A673 (cell line): ENCODE measurements at regions of chr13 and their contacts with region 1.

Region 1: DNA sequence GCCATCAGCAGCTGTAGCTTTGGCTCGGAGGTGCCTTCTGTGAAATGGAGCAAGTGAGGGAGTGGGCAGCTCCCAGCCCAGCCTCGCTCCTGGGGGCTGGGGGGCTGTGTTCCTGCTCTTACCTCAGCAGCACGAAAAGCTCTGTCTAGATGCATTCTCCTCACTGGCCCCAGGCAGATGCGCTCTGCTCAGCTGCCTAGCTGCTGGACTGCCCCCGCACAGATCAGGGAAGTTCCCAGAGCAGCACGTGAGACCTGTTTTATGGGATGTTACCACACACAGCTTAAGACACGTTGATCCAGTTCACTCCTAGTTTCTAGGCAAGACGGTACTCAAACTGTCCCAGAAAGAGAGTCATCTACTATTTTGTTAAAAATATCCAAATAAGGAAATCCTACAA is 13.6 kb downstream of the LCP1 start:
- DNase-seq: no peak
- H3K4me3 ChIP-seq: no peak overlapping the region
- H3K27ac ChIP-seq: no peak overlapping the region
- H3K4me1 ChIP-seq: peaks cover 28% of the 10 kb centered on the region
- H3K27me3 ChIP-seq: no peaks in the 10 kb centered on the region
- CTCF ChIP-seq: no peak

Region 2: GRCh38 chr13:46288570-46289259 is 120.4 kb after region 1 on chr13:
- CTCF ChIA-PET with region 1: no interaction called
- POLR2A ChIA-PET with region 1: no interaction called
- intact Hi-C with region 1: loop called (anchors 5 kb)
- DNase-seq: peak; percentile 84
- H3K4me3 ChIP-seq: no peak overlapping the region
- H3K27ac ChIP-seq: peak overlapping the region; percentile 27
- H3K4me1 ChIP-seq: peaks cover 37% of the 10 kb centered on the region
- H3K27me3 ChIP-seq: no peaks in the 10 kb centered on the region
- CTCF ChIP-seq: peak; percentile 89

Region 3: GRCh38 chr13:46743191-46743590 is 574.9 kb after region 1 on chr13:
- CTCF ChIA-PET with region 1: no interaction called
- POLR2A ChIA-PET with region 1: no interaction called
- intact Hi-C with region 1: no loop called
- DNase-seq: no peak
- H3K4me3 ChIP-seq: no peak overlapping the region
- H3K27ac ChIP-seq: no peak overlapping the region
- H3K4me1 ChIP-seq: peaks cover 10% of the 10 kb centered on the region
- H3K27me3 ChIP-seq: no peaks in the 10 kb centered on the region
- CTCF ChIP-seq: no peak